ENCODE measurements at regions of chr16 and their contacts with region 1.

Region 1: GRCh38 chr16:27333549-27333948 is 19.8 kb downstream of the IL4R start:
- DNase-seq: no peak
- ATAC-seq: no peak
- H3K4me3 Mint-ChIP-seq: no peak overlapping the region
- H3K27ac Mint-ChIP-seq: no peak overlapping the region
- H3K4me1 Mint-ChIP-seq: peaks cover 71% of the 10 kb centered on the region
- H3K27me3 Mint-ChIP-seq: no peaks in the 10 kb centered on the region

Region 2: GRCh38 chr16:26149364-26150190 is 1184.0 kb before region 1 on chr16:
- CTCF ChIA-PET with region 1: no interaction called
- POLR2A ChIA-PET with region 1: interaction called, 14 read pairs
- intact Hi-C with region 1: no loop called
- DNase-seq: no peak
- ATAC-seq: no peak
- H3K4me3 Mint-ChIP-seq: no peak overlapping the region
- H3K27ac Mint-ChIP-seq: no peak overlapping the region
- H3K4me1 Mint-ChIP-seq: no peaks in the 10 kb centered on the region
- H3K27me3 Mint-ChIP-seq: peaks cover 5% of the 10 kb centered on the region

Region 3: GRCh38 chr16:27268376-27269299 is 64.9 kb before region 1 on chr16 and contains the start of gene NSMCE1:
- CTCF ChIA-PET with region 1: no interaction called
- POLR2A ChIA-PET with region 1: no interaction called
- intact Hi-C with region 1: no loop called
- DNase-seq: peak; percentile 99
- ATAC-seq: peak; percentile 94
- H3K4me3 Mint-ChIP-seq: peak within 1 kb of the TSS; percentile 90
- H3K27ac Mint-ChIP-seq: peak within 1 kb of the TSS; percentile 95
- H3K4me1 Mint-ChIP-seq: peaks cover 72% of the 10 kb centered on the region
- H3K27me3 Mint-ChIP-seq: no peaks in the 10 kb centered on the region
- total RNA-seq, gene NSMCE1: 110 to 127 TPM

Region 4: DNA sequence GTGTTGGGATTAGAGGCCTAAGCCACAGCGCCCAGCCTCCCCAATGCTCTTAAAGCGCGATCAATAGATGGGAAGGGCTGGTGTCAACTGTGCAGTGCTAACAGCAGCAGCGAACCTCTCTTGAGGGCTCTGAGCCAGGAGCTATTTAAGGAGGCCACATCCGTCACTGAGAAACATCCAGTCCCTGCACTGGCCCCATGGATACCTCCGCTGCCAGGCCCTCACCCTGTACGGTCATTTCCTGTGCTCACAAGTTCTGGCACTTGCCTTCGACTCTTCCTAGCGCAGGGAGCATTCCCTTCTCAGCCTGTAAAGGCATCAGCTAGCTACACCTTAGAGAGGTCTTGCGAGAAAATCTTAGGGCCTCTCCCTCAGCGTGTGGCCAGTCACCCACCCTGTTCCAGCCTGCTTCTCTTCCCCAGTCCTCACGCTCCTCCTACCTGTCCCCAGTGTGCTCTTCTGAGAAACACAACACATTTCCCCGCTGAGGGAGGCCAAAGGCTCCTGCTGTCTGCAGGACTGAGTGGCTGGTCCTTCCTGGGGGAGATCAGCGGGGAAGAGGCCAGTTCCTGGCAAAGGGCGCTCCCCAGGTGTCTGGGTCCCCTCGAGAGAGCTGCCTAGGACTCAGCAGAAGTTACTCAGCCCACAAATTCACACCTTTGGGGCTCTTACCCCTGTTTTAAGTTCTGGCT is 187.6 kb after region 1 on chr16:
- CTCF ChIA-PET with region 1: no interaction called
- POLR2A ChIA-PET with region 1: no interaction called
- intact Hi-C with region 1: no loop called
- DNase-seq: no peak
- ATAC-seq: no peak
- H3K4me3 Mint-ChIP-seq: no peak overlapping the region
- H3K27ac Mint-ChIP-seq: no peak overlapping the region
- H3K4me1 Mint-ChIP-seq: no peaks in the 10 kb centered on the region
- H3K27me3 Mint-ChIP-seq: no peaks in the 10 kb centered on the region

Region 5: GRCh38 chr16:27600381-27600780 is 266.8 kb after region 1 on chr16:
- CTCF ChIA-PET with region 1: no interaction called
- POLR2A ChIA-PET with region 1: no interaction called
- intact Hi-C with region 1: no loop called
- DNase-seq: no peak
- ATAC-seq: no peak
- H3K4me3 Mint-ChIP-seq: no peak overlapping the region
- H3K27ac Mint-ChIP-seq: no peak overlapping the region
- H3K4me1 Mint-ChIP-seq: no peaks in the 10 kb centered on the region
- H3K27me3 Mint-ChIP-seq: no peaks in the 10 kb centered on the region

Measured in activated CD4-positive, alpha-beta T cell treated with anti-CD3 and anti-CD28 coated beads for 36 hours (primary cell).